Common myeloid progenitor, CD34-positive (primary cell): ENCODE measurements at regions of chr15 and their contacts with region 1.

Region 1: GRCh38 chr15:90954712-90955671 is at the start of gene RCCD1:
- DNase-seq: peak; percentile 92 to 96 (median 96)
- H3K4me3 ChIP-seq: peak within 1 kb of the TSS; percentile 27 to 87 (median 73)
- H3K27ac ChIP-seq: peak within 1 kb of the TSS; percentile 58 to 88
- H3K4me1 ChIP-seq: peaks cover 2 to 32% (median 26%) of the 10 kb centered on the region in 4 experiments
- H3K27me3 ChIP-seq: no peaks in the 10 kb centered on the region

Region 2: DNA sequence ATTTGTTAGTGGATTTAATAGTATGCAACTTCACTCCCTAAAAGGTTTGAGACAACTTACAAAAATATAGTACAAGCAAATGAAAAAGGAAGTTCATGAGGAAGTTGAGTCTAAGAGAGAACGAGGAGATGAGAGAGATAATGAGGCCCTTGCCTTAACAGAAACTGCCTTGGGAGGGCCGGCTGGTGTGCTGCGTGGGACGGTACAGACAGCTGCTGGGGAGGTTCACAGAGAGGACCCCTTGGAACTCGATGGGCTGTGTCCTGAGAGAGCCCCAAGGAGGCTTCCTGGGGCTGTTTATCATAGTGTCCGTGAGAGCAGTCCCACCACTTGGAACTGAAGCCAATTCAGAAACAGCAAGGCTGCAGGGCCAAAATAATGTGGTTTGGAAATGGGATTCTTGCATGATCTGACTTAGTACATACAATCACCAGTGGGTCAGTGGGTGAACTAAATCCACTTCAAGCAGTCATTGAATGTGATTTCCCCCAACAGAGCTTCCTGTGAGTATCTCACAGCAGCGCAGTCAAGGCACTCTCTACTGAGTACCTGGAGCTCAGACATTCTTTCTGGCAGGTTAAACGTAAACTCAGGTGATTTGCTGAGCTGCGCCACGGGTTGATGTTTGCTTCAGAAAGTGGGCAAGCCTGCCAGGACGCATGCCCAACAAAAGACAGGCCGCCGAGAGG is 334.5 kb before region 1 on chr15:
- CTCF ChIA-PET with region 1: no interaction called
- POLR2A ChIA-PET with region 1: no interaction called
- DNase-seq: peak; percentile 43 to 82 (median 71)
- H3K4me3 ChIP-seq: peak overlapping the region in 2 of 7 experiments; percentile 14 to 38
- H3K27ac ChIP-seq: peak overlapping the region in 1 of 2 experiments; percentile 44
- H3K4me1 ChIP-seq: peaks cover 11 to 29% (median 18%) of the 10 kb centered on the region in 4 experiments
- H3K27me3 ChIP-seq: no peaks in the 10 kb centered on the region

Region 3: GRCh38 chr15:90839187-90840071 is 115.6 kb before region 1 on chr15:
- CTCF ChIA-PET with region 1: no interaction called
- POLR2A ChIA-PET with region 1: no interaction called
- DNase-seq: peak; percentile 65 to 89 (median 86)
- H3K4me3 ChIP-seq: peak overlapping the region in 6 of 7 experiments; percentile 45 to 77 (median 58)
- H3K27ac ChIP-seq: peak overlapping the region; percentile 59 to 76
- H3K4me1 ChIP-seq: peaks cover 4 to 52% (median 46%) of the 10 kb centered on the region in 4 experiments
- H3K27me3 ChIP-seq: no peaks in the 10 kb centered on the region

Region 4: DNA sequence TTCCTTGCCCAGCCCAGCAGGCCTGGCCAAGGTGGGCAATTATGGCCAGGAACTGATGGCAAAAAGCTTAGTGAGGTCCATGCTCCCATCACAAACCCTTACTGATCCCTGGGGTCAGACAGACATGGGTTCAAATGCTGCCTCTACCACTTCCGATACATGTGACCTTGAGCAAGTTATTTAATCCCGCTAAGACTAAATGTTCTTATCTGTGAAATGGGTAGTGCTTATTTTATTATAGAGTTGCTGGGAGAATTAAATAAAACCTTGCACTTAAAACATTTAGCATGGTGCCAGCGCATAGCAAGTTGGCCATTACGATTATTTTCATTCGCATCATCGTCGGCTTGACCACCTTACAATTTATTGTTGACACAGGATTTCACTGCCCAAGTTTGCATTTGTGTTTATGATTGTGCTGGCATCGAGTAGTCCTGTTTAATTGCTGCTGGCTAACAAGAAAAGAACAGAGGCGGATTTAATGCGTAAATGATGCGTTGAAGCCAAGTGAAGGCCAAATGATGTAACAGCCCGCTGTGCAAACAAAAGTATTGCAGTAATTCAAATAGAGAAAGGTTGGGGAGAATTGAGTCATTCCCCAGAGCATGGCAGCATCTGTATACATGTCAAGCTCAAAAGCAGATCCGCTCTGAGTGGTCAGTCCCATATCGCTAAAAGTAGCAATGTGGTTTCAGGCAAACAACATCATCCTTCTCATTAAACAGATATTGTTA is 93.9 kb before region 1 on chr15:
- CTCF ChIA-PET with region 1: no interaction called
- POLR2A ChIA-PET with region 1: no interaction called
- DNase-seq: no peak
- H3K4me3 ChIP-seq: no peak overlapping the region
- H3K27ac ChIP-seq: no peak overlapping the region
- H3K4me1 ChIP-seq: peaks cover 0 to 17% (median under 1%) of the 10 kb centered on the region in 4 experiments
- H3K27me3 ChIP-seq: no peaks in the 10 kb centered on the region

Region 5: GRCh38 chr15:90931737-90932659 is 23.0 kb before region 1 on chr15 and contains the start of gene HDDC3:
- CTCF ChIA-PET with region 1: interaction called, 134 read pairs
- POLR2A ChIA-PET with region 1: no interaction called
- DNase-seq: peak; percentile 90 to 93 (median 91)
- H3K4me3 ChIP-seq: peak within 1 kb of the TSS; percentile 55 to 91 (median 87)
- H3K27ac ChIP-seq: peak within 1 kb of the TSS; percentile 36 to 89
- H3K4me1 ChIP-seq: peaks cover 20 to 72% (median 60%) of the 10 kb centered on the region in 4 experiments
- H3K27me3 ChIP-seq: no peaks in the 10 kb centered on the region

Region 6: GRCh38 chr15:90970274-90970673 is 15.3 kb after region 1 on chr15:
- CTCF ChIA-PET with region 1: interaction called, 19 read pairs
- POLR2A ChIA-PET with region 1: interaction called, 4 read pairs
- DNase-seq: no peak
- H3K4me3 ChIP-seq: no peak overlapping the region
- H3K27ac ChIP-seq: no peak overlapping the region
- H3K4me1 ChIP-seq: no peaks in the 10 kb centered on the region
- H3K27me3 ChIP-seq: no peaks in the 10 kb centered on the region

Region 7: DNA sequence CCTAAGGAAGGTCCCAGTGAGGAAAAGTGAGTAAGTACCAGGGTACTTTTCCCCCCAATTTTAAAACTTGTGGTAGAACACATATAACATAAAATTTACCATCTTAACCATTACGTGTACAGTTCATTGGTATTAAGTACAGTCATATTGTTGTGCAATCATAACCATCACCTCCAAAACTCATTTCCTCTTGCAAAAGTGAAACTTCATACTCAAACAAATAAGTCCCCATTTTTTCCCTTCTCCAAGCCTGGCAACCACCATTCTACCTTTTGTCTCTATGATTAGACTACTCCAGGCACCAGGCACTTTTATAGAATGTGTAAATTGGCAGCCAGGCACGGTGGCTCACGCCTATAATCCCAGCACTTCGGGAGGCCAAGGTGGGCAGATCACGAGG is 27.1 kb after region 1 on chr15:
- CTCF ChIA-PET with region 1: interaction called, 11 read pairs
- POLR2A ChIA-PET with region 1: no interaction called
- DNase-seq: peak in 2 of 3 donors; percentile 48 to 56
- H3K4me3 ChIP-seq: no peak overlapping the region
- H3K27ac ChIP-seq: no peak overlapping the region
- H3K4me1 ChIP-seq: peaks cover 0 to 7% (median 4%) of the 10 kb centered on the region in 4 experiments
- H3K27me3 ChIP-seq: no peaks in the 10 kb centered on the region

Region 8: GRCh38 chr15:91032919-91033803 is 78.2 kb after region 1 on chr15:
- CTCF ChIA-PET with region 1: interaction called, 23 read pairs
- POLR2A ChIA-PET with region 1: interaction called, 3 read pairs
- DNase-seq: peak; percentile 38 to 63 (median 62)
- H3K4me3 ChIP-seq: peak overlapping the region in 2 of 7 experiments; percentile 11 to 48
- H3K27ac ChIP-seq: no peak overlapping the region
- H3K4me1 ChIP-seq: peaks cover 0 to 4% (median 1%) of the 10 kb centered on the region in 4 experiments
- H3K27me3 ChIP-seq: peaks cover 0 to 2% (median 0%) of the 10 kb centered on the region in 5 experiments

Region 9: DNA sequence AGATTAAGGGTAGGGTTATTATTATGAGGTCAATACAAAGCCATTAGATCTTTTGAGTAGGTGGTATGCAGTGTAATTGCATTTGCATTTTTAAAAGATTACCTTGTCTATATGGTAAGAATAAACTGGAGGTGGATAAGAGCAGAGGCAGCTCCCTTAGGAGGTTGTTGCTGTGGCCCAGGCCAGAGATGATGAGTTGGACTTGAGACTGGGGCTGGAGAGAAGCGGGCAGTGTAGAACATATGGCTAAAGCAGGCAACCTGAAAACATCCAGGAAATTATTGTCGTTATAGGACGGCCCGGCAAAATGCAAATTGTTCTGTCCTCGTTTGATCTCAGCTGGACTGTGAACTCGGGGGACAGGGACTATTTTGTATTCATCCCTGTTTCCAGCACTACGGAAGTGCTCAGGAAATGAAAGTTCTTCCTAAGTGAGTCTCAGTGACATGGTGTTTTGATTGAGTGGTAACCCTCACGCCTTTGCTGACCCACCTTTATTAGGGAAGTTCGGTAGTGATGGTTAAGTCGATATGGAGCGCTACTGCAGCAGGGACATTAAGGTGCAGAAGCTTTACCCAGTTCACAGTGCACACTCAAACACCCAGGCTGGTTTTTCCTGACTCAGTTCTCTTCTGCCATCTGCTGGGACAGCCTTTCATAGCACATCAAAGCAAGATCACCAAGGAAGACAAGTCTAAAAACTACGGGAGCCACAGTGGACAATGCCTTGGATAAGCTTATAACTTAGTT is 94.6 kb after region 1 on chr15:
- CTCF ChIA-PET with region 1: interaction called, 30 read pairs
- POLR2A ChIA-PET with region 1: no interaction called
- DNase-seq: peak; percentile 62 to 80 (median 75)
- H3K4me3 ChIP-seq: no peak overlapping the region
- H3K27ac ChIP-seq: no peak overlapping the region
- H3K4me1 ChIP-seq: peaks cover 0 to 9% (median 6%) of the 10 kb centered on the region in 4 experiments
- H3K27me3 ChIP-seq: peaks cover 0 to 9% (median 3%) of the 10 kb centered on the region in 5 experiments

Region 10: GRCh38 chr15:91135201-91136130 is 180.5 kb after region 1 on chr15:
- CTCF ChIA-PET with region 1: no interaction called
- POLR2A ChIA-PET with region 1: no interaction called
- DNase-seq: no peak
- H3K4me3 ChIP-seq: no peak overlapping the region
- H3K27ac ChIP-seq: no peak overlapping the region
- H3K4me1 ChIP-seq: no peaks in the 10 kb centered on the region
- H3K27me3 ChIP-seq: peaks cover 0 to 8% (median 0%) of the 10 kb centered on the region in 5 experiments